ENCODE measurements at regions of chr1 and their contacts with region 1.

Region 1: GRCh38 chr1:45303582-45304310 is 22.9 kb upstream of the HPDL start:
- DNase-seq: peak; percentile 98
- H3K4me3 ChIP-seq: peak overlapping the region; percentile 61 to 63
- H3K27ac ChIP-seq: peak overlapping the region; percentile 86 to 90
- H3K4me1 ChIP-seq: no peaks in the 10 kb centered on the region
- H3K27me3 ChIP-seq: no peaks in the 10 kb centered on the region
- CTCF ChIP-seq: peak; percentile 65 to 85 (median 79)
- POLR2A ChIP-seq: peak; percentile 82

Region 2: GRCh38 chr1:44730741-44731512 is 572.8 kb before region 1 on chr1 and contains the start of gene RNU5D-1:
- intact Hi-C with region 1: loop called (anchors 10 kb)
- DNase-seq: peak; percentile 86
- H3K4me3 ChIP-seq: peak within 1 kb of the TSS; percentile 1 to 2
- H3K27ac ChIP-seq: peak within 1 kb of the TSS; percentile 72 to 74
- H3K4me1 ChIP-seq: no peaks in the 10 kb centered on the region
- H3K27me3 ChIP-seq: no peaks in the 10 kb centered on the region
- CTCF ChIP-seq: peak; percentile 73 to 83 (median 75)
- POLR2A ChIP-seq: peak; percentile 65
- total RNA-seq, gene RNU5D-1: not detected

Region 3: GRCh38 chr1:44775078-44775929 is 528.4 kb before region 1 on chr1 and contains the start of gene RPS8:
- intact Hi-C with region 1: loop called (anchors 10 kb)
- DNase-seq: peak; percentile 92
- H3K4me3 ChIP-seq: peak within 1 kb of the TSS; percentile 72 to 80
- H3K27ac ChIP-seq: peak within 1 kb of the TSS; percentile 92 to 94
- H3K4me1 ChIP-seq: peaks cover 5% of the 10 kb centered on the region
- H3K27me3 ChIP-seq: no peaks in the 10 kb centered on the region
- CTCF ChIP-seq: peak in 3 of 4 experiments; percentile 9 to 35 (median 10)
- POLR2A ChIP-seq: peak; percentile 85
- total RNA-seq, gene RPS8: 1,669 to 3,439 TPM

Region 4: DNA sequence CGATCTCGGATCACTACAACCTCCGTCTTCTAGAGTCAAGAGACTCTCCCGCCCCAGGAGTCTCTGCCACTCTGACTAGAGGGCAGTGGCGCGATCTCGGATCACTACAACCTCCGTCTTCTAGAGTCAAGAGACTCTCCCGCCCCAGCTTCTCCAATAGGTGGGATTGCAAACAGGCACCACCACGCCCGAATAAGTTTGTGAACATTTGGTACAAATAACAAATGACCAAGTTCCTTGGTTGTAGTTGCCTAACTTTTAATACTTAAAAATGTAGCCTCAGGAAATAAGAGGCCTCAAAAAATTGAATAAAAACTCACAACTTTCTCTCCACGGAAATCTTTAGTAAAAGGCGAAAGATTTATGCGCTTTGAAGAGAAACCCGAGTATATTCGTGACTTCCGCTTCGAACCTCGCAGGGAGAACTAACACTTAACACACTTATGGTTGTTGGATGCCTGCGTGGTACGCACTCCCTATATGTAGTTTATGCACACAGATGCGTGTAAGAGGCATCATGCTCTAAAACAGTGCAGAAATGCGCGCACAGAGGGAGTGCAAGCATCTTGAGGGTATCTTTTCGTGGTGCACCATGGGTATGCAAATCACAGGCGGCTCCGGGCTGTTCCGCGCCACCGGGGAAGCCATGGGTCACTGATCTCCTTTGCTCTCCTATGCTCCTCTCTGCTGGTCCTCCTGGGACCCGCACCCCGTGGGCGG is 484.0 kb before region 1 on chr1:
- intact Hi-C with region 1: loop called (anchors 10 kb)
- DNase-seq: peak; percentile 56
- H3K4me3 ChIP-seq: peak overlapping the region; percentile 31 to 43
- H3K27ac ChIP-seq: peak overlapping the region; percentile 86 to 88
- H3K4me1 ChIP-seq: no peaks in the 10 kb centered on the region
- H3K27me3 ChIP-seq: no peaks in the 10 kb centered on the region
- CTCF ChIP-seq: no peak
- POLR2A ChIP-seq: peak; percentile 70

Region 5: GRCh38 chr1:45011837-45012638 is 291.7 kb before region 1 on chr1 and contains the start of gene UROD:
- intact Hi-C with region 1: loop called (anchors 2 kb)
- DNase-seq: peak; percentile 92
- H3K4me3 ChIP-seq: peak within 1 kb of the TSS; percentile 74 to 89
- H3K27ac ChIP-seq: peak within 1 kb of the TSS; percentile 71 to 75
- H3K4me1 ChIP-seq: peaks cover 16% of the 10 kb centered on the region
- H3K27me3 ChIP-seq: no peaks in the 10 kb centered on the region
- CTCF ChIP-seq: peak in 2 of 4 experiments; percentile 6 to 11
- POLR2A ChIP-seq: peak; percentile 33
- total RNA-seq, gene UROD: 57.7 to 152 TPM

Region 6: GRCh38 chr1:45490626-45491486 is 187.1 kb after region 1 on chr1 and contains the start of gene TESK2:
- intact Hi-C with region 1: loop called (anchors 5 kb)
- DNase-seq: peak; percentile 100
- H3K4me3 ChIP-seq: peak within 1 kb of the TSS; percentile 86 to 99
- H3K27ac ChIP-seq: peak within 1 kb of the TSS; percentile 90 to 93
- H3K4me1 ChIP-seq: no peaks in the 10 kb centered on the region
- H3K27me3 ChIP-seq: no peaks in the 10 kb centered on the region
- CTCF ChIP-seq: peak in 3 of 4 experiments; percentile 32 to 87 (median 54)
- POLR2A ChIP-seq: peak; percentile 99
- total RNA-seq, gene TESK2: 21.4 to 26.4 TPM

Measured in prostate gland (tissue), 2 donors.